Mammary epithelial cell (primary cell): ENCODE measurements at regions of chr10 and their contacts with region 1.

Region 1: GRCh38 chr10:13808556-13809391 is 222.0 kb downstream of the PRPF18 start:
- DNase-seq: no peak
- H3K4me3 ChIP-seq: no peak overlapping the region
- H3K27ac ChIP-seq: no peak overlapping the region
- H3K4me1 ChIP-seq: peaks cover 7% of the 10 kb centered on the region
- H3K27me3 ChIP-seq: no peaks in the 10 kb centered on the region
- CTCF ChIP-seq: no peak

Region 2: GRCh38 chr10:13891128-13892000 is 82.6 kb after region 1 on chr10:
- CTCF ChIA-PET with region 1: no interaction called
- dilution Hi-C with region 1: no loop called
- in situ Hi-C with region 1: no loop called
- intact Hi-C with region 1: loop called (anchors 5 kb)
- DNase-seq: no peak
- H3K4me3 ChIP-seq: peak overlapping the region; percentile 44 to 67 (median 53)
- H3K27ac ChIP-seq: peak overlapping the region; percentile 18
- H3K4me1 ChIP-seq: peaks cover 39% of the 10 kb centered on the region
- H3K27me3 ChIP-seq: no peaks in the 10 kb centered on the region
- CTCF ChIP-seq: no peak

Region 3: DNA sequence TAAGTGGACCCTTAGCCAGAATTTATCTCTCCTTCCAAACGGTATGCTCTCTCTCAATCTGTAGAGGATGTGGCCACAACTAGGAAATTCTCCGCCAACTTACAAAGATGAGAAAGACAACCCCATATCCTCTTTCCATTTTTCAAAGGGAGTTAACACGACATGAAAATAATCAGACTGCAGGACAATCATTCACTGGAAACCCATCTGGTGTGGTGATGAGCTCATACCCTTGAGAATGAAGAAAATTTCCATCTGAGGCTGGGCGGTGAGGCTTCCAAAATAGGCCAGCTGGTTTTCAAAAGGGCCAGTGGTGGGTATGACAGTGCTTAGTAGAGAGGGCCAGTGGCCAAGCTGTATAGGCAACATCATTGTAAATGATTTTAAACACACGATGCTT is 152.3 kb after region 1 on chr10:
- CTCF ChIA-PET with region 1: no interaction called
- dilution Hi-C with region 1: no loop called
- in situ Hi-C with region 1: no loop called
- intact Hi-C with region 1: loop called (anchors 10 kb)
- DNase-seq: peak; percentile 54
- H3K4me3 ChIP-seq: no peak overlapping the region
- H3K27ac ChIP-seq: no peak overlapping the region
- H3K4me1 ChIP-seq: peaks cover 12% of the 10 kb centered on the region
- H3K27me3 ChIP-seq: no peaks in the 10 kb centered on the region
- CTCF ChIP-seq: no peak